CD4-positive, alpha-beta T cell (primary cell): ENCODE measurements at regions of chr17 and their contacts with region 1.

Region 1: GRCh38 chr17:39094607-39095308 is 56.7 kb downstream of the PLXDC1 start:
- DNase-seq: peak in 10 of 14 experiments; percentile 15 to 77 (median 36)
- ATAC-seq: peak; percentile 42
- H3K4me3 ChIP-seq: no peak overlapping the region
- H3K4me3 Mint-ChIP-seq: peak overlapping the region; percentile 78
- H3K27ac ChIP-seq: peak overlapping the region; percentile 55 to 58
- H3K27ac Mint-ChIP-seq: peak overlapping the region; percentile 94
- H3K4me1 ChIP-seq: peaks cover 93% of the 10 kb centered on the region
- H3K4me1 Mint-ChIP-seq: peaks cover 90% of the 10 kb centered on the region
- H3K27me3 ChIP-seq: no peaks in the 10 kb centered on the region
- H3K27me3 Mint-ChIP-seq: no peaks in the 10 kb centered on the region
- CTCF ChIP-seq: no peak

Region 2: GRCh38 chr17:39126436-39126835 is 31.7 kb after region 1 on chr17:
- CTCF ChIA-PET with region 1: interaction called, 3 read pairs
- POLR2A ChIA-PET with region 1: interaction called, 4 read pairs
- intact Hi-C with region 1: loop called in 1 of 2 experiments (anchors 5 kb)
- DNase-seq: no peak
- ATAC-seq: no peak
- H3K4me3 ChIP-seq: no peak overlapping the region
- H3K4me3 Mint-ChIP-seq: no peak overlapping the region
- H3K27ac ChIP-seq: no peak overlapping the region
- H3K27ac Mint-ChIP-seq: no peak overlapping the region
- H3K4me1 ChIP-seq: no peaks in the 10 kb centered on the region
- H3K4me1 Mint-ChIP-seq: peaks cover 7% of the 10 kb centered on the region
- H3K27me3 ChIP-seq: no peaks in the 10 kb centered on the region
- H3K27me3 Mint-ChIP-seq: no peaks in the 10 kb centered on the region
- CTCF ChIP-seq: no peak